HCT116 (cell line): ENCODE measurements at regions of chr1 and their contacts with region 1.

Region 1: GRCh38 chr1:163315773-163316374 is 5.9 kb upstream of the NUF2 start:
- DNase-seq: no peak
- ATAC-seq: no peak
- H3K4me3 ChIP-seq: no peak overlapping the region
- H3K27ac ChIP-seq: no peak overlapping the region
- H3K4me1 ChIP-seq: peaks cover 0 to 9% of the 10 kb centered on the region in 2 experiments; a peak in 3 of 4 replicates
- H3K27me3 ChIP-seq: no peaks in the 10 kb centered on the region
- CTCF ChIP-seq: peak; percentile 44 to 80 (median 70); a peak in 5 of 6 replicates
- POLR2A ChIP-seq: no peak
- RAD21 ChIP-seq: peak; percentile 71

Region 2: GRCh38 chr1:162847839-162848453 is 467.9 kb before region 1 on chr1:
- CTCF ChIA-PET with region 1: interaction called, 32 read pairs
- POLR2A ChIA-PET with region 1: no interaction called
- RAD21 ChIA-PET with region 1: no interaction called
- intact Hi-C with region 1: no loop called
- DNase-seq: peak; percentile 62
- ATAC-seq: peak; percentile 80
- H3K4me3 ChIP-seq: no peak overlapping the region
- H3K27ac ChIP-seq: no peak overlapping the region
- H3K4me1 ChIP-seq: no peaks in the 10 kb centered on the region
- H3K27me3 ChIP-seq: no peaks in the 10 kb centered on the region
- CTCF ChIP-seq: peak; percentile 80 to 96 (median 89)
- POLR2A ChIP-seq: no peak
- RAD21 ChIP-seq: peak; percentile 85

Region 3: DNA sequence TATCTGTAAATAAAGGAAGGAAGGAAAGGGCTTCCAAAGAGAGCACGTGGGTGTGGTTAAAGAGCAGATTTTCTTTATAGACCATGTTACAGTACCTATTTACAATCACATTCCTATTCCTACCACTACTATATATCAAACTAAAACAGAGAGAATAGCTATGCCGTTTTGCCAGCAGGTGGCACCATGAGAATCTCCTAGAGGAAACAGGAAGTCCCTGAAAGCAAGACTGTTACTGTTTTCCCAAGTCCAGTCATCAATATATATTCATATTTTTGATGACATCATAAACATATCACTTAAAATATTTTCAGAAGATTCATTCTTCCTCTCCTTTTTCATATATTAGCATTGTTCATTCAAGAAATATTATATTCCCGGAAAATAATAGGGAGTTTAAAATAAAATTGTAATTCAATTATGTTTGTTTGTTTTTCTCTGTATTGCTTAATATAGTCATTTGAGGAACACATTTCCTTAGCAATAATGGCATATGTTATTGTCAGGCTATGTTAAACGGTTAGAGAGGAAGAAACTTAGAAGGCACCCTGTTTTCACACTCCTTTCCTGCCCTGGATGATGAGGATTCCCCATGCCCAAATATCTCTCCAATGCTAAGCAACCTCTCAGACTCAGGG is 461.5 kb before region 1 on chr1:
- CTCF ChIA-PET with region 1: interaction called, 32 read pairs
- POLR2A ChIA-PET with region 1: no interaction called
- RAD21 ChIA-PET with region 1: no interaction called
- intact Hi-C with region 1: loop called (anchors 1 kb)
- DNase-seq: peak; percentile 77
- ATAC-seq: peak; percentile 91
- H3K4me3 ChIP-seq: no peak overlapping the region
- H3K27ac ChIP-seq: no peak overlapping the region
- H3K4me1 ChIP-seq: peaks cover 16 to 26% of the 10 kb centered on the region in 2 experiments
- H3K27me3 ChIP-seq: no peaks in the 10 kb centered on the region
- CTCF ChIP-seq: peak; percentile 75 to 85 (median 79)
- POLR2A ChIP-seq: no peak
- RAD21 ChIP-seq: peak; percentile 84

Region 4: GRCh38 chr1:162878000-162878596 is 437.8 kb before region 1 on chr1:
- CTCF ChIA-PET with region 1: interaction called, 28 read pairs
- POLR2A ChIA-PET with region 1: no interaction called
- RAD21 ChIA-PET with region 1: interaction called in 1 of 2 experiments, 3 read pairs
- intact Hi-C with region 1: loop called (anchors 1 kb)
- DNase-seq: peak; percentile 68
- ATAC-seq: peak; percentile 93
- H3K4me3 ChIP-seq: no peak overlapping the region
- H3K27ac ChIP-seq: no peak overlapping the region
- H3K4me1 ChIP-seq: no peaks in the 10 kb centered on the region
- H3K27me3 ChIP-seq: no peaks in the 10 kb centered on the region
- CTCF ChIP-seq: peak; percentile 81 to 88 (median 85)
- POLR2A ChIP-seq: no peak
- RAD21 ChIP-seq: peak; percentile 96

Region 5: DNA sequence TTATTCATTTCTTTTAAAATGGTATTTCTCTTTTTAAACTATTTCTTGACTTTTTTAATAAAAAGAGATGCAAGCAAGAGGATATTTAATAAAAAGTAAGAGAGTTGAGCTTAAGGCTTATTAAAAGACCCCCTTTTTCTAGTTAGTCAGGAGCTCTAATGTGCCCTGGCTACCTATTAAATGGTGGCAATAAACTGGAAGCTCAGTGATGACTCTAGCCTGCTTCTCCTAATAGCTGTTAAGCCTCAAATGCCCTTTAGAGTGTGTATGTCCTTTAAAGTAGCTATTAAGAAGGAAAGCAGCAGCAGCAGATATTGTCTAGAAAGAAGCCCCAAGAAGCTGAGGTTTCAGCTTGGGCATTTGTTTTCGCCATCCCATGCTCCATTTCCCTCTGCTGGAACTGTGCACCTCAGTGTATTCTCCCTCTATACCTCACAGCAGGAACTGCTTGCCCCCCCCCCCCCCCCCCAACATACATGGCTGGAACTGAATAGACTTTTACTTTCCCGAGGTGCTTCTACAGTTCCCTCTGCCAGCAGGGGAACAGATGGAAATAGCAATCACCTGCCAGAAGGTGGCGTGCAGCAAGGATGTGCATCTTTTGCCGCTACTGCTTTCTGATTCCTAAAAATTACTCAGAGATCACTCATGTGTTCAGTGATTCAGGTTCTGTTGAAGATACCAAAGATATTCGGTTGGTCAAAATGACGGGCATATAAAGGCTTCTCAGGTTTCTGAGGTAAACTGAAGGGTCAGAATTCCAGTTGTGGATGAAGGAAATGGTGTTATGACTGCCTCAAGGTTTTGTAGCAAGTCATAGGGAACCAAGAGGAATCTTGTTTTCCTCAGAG is 244.2 kb before region 1 on chr1:
- CTCF ChIA-PET with region 1: interaction called, 5 read pairs
- POLR2A ChIA-PET with region 1: no interaction called
- RAD21 ChIA-PET with region 1: interaction called in 1 of 2 experiments, 3 read pairs
- intact Hi-C with region 1: loop called (anchors 2 kb)
- DNase-seq: peak; percentile 60
- ATAC-seq: peak; percentile 86
- H3K4me3 ChIP-seq: no peak overlapping the region
- H3K27ac ChIP-seq: no peak overlapping the region
- H3K4me1 ChIP-seq: peaks cover 0 to 16% of the 10 kb centered on the region in 2 experiments; a peak in 3 of 4 replicates
- H3K27me3 ChIP-seq: peaks cover 25% of the 10 kb centered on the region
- CTCF ChIP-seq: peak; percentile 78 to 86 (median 85)
- POLR2A ChIP-seq: no peak
- RAD21 ChIP-seq: peak; percentile 59